ENCODE measurements at regions of chr21 and their contacts with region 1.

Region 1: DNA sequence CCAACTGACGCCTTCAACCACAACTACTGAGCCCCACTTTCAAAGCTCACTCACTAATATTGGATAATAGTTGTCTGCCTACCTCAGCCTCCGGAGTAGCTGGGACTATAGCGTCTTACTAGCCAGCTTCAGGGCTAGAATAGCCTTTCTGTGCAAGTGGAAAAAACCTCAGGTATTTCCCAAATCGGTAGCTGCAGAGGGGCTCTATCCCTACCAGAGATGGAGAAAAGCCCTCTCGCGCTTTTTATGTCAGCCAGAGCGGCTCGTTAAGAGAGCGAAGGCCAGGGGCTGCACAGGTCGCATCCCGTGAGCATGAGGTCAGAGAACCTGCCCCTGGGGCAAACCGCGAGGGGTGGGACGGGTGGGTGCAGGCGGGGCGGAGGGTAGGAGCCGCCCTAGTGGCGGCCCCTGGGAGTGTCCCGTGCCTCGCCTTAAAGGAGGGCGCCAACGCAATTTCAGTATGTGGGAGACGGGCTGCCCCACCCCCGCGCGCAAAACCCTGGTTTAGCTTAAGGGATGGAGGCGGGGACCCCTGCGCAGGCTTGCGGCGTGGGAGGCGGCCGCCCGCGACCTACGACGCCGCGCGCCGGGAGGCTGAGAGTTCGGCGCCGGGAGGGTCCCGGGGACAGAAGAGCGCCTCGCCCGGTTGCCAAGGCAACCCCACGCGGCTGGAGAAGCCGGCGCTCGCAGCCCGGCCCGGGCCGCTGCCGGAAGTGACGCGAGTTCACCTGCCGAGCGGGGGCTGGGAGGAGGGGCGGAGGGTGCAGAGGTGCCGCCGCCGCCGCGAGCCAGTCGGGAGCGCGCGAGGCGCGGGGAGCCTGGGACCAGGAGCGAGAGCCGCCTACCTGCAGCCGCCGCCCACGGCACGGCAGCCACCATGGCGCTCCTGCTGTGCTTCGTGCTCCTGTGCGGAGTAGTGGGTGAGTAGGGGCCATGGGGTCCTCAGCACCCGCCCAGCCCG is at the start of gene CXADR:
- DNase-seq: peak; percentile 77
- ATAC-seq: peak; percentile 92
- total RNA-seq, gene CXADR: 25.5 TPM

Region 2: GRCh38 chr21:17387030-17387617 is 125.4 kb before region 1 on chr21:
- intact Hi-C with region 1: loop called (anchors 5 kb)
- DNase-seq: no peak
- ATAC-seq: no peak

Region 3: GRCh38 chr21:17548262-17548661 is 35.7 kb after region 1 on chr21:
- intact Hi-C with region 1: loop called (anchors 2 kb)
- DNase-seq: no peak
- ATAC-seq: peak; percentile 68

Region 4: GRCh38 chr21:17585875-17586450 is 73.4 kb after region 1 on chr21:
- intact Hi-C with region 1: loop called (anchors 10 kb)
- DNase-seq: no peak
- ATAC-seq: no peak

Measured in Right ventricle myocardium inferior (tissue), 1 donor.